HCT116 (cell line): ENCODE measurements at regions of chr1 and their contacts with region 1.

Region 1: GRCh38 chr1:105516068-105516467 is 1540.4 kb upstream of the PRMT6 start:
- DNase-seq: no peak
- ATAC-seq: no peak
- H3K4me3 ChIP-seq: no peak overlapping the region
- H3K27ac ChIP-seq: no peak overlapping the region
- H3K4me1 ChIP-seq: no peaks in the 10 kb centered on the region
- H3K27me3 ChIP-seq: no peaks in the 10 kb centered on the region
- CTCF ChIP-seq: no peak
- POLR2A ChIP-seq: no peak
- RAD21 ChIP-seq: no peak

Region 2: GRCh38 chr1:105533996-105534395 is 17.9 kb after region 1 on chr1:
- CTCF ChIA-PET with region 1: no interaction called
- POLR2A ChIA-PET with region 1: no interaction called
- RAD21 ChIA-PET with region 1: no interaction called
- intact Hi-C with region 1: loop called (anchors 1 kb)
- DNase-seq: no peak
- ATAC-seq: no peak
- H3K4me3 ChIP-seq: no peak overlapping the region
- H3K27ac ChIP-seq: no peak overlapping the region
- H3K4me1 ChIP-seq: no peaks in the 10 kb centered on the region
- H3K27me3 ChIP-seq: no peaks in the 10 kb centered on the region
- CTCF ChIP-seq: no peak
- POLR2A ChIP-seq: no peak
- RAD21 ChIP-seq: no peak

Region 3: DNA sequence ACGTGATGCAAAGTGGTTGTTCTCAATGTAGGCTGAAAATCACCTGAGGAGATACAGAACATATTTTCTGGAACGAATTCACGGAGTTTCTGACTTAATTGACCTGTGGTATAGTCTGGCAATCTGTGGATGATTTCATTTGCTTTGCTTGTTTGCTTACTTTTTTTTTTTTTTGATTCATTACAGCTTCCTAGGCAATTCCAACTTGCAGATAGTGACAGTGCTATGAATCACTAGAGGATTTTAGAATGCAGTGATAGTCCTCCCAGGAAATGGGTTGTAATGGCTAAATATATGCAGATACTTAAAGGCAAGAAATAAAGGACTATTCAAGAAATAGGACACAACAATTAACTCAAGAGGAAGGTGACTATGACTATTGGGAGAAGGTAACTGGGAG is 162.3 kb after region 1 on chr1:
- CTCF ChIA-PET with region 1: no interaction called
- POLR2A ChIA-PET with region 1: no interaction called
- RAD21 ChIA-PET with region 1: no interaction called
- intact Hi-C with region 1: no loop called
- DNase-seq: no peak
- ATAC-seq: no peak
- H3K4me3 ChIP-seq: no peak overlapping the region
- H3K27ac ChIP-seq: no peak overlapping the region
- H3K4me1 ChIP-seq: no peaks in the 10 kb centered on the region
- H3K27me3 ChIP-seq: no peaks in the 10 kb centered on the region
- CTCF ChIP-seq: no peak
- POLR2A ChIP-seq: no peak
- RAD21 ChIP-seq: no peak

Region 4: GRCh38 chr1:106435269-106435668 is 919.2 kb after region 1 on chr1:
- CTCF ChIA-PET with region 1: no interaction called
- POLR2A ChIA-PET with region 1: no interaction called
- RAD21 ChIA-PET with region 1: no interaction called
- intact Hi-C with region 1: no loop called
- DNase-seq: no peak
- ATAC-seq: no peak
- H3K4me3 ChIP-seq: no peak overlapping the region
- H3K27ac ChIP-seq: no peak overlapping the region
- H3K4me1 ChIP-seq: no peaks in the 10 kb centered on the region
- H3K27me3 ChIP-seq: no peaks in the 10 kb centered on the region
- CTCF ChIP-seq: no peak
- POLR2A ChIP-seq: no peak
- RAD21 ChIP-seq: no peak